ENCODE measurements at regions of chr16 and their contacts with region 1.

Region 1: GRCh38 chr16:19138601-19139000 is 24.8 kb downstream of the ITPRIPL2 start:
- DNase-seq: peak; percentile 80
- H3K4me3 ChIP-seq: no peak overlapping the region
- H3K27me3 ChIP-seq: no peaks in the 10 kb centered on the region; the same call in 1 of the 2 replicates
- CTCF ChIP-seq: no peak

Region 2: GRCh38 chr16:19113453-19114351 is 24.9 kb before region 1 on chr16 and contains the start of gene ITPRIPL2:
- CTCF ChIA-PET with region 1: interaction called, 12 read pairs
- POLR2A ChIA-PET with region 1: no interaction called
- DNase-seq: peak; percentile 61
- H3K4me3 ChIP-seq: peak within 1 kb of the TSS; percentile 75
- H3K27me3 ChIP-seq: no peaks in the 10 kb centered on the region
- CTCF ChIP-seq: 0 out of 2 replicates have a peak, but pooled peaks have one; percentile 13
- polyA plus RNA-seq, gene ITPRIPL2: 14.9 and 15.8 TPM in 2 replicates

Region 3: DNA sequence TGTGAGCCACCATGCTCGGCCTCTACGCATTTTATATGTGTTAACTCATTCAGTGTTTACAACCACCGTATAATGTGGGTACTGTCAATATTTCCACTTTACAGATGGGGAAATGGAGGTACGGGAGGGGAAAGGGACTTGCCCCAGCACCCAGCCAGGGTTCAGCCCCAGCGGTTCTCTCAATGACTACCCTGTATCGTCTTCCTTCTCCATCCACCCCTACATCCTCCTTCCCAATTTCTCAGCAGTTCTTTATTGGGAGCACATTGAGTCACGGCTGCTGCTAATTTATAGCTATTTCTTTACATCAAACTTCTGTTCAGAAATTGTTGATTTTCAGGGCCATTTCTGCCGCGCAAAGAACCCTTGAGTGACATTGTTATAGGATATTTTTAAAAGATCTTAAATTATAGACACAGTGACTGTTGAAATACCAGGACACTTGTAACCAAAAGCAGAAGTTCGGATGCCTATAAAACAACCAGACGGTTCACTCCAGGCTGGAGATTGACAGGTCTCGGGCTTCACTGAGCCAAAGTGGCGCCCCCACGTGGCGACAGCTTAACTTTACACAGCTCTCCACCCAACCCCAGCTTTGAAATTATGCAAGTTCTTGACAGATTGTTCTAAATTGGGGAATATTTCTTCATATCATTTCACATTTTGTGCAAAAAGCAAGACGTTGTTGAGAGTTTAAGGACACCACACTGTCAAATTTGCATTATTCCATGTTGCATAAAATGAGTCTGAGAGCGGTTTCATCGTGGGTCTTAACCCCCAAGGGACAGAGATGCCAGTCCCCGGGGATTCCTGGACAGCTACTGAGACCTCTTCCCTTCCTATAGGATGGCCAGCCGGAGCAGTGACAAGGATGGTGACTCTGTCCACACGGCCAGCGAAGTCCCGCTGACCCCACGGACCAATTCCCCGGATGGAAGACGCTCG is 41.2 kb after region 1 on chr16:
- CTCF ChIA-PET with region 1: interaction called, 31 read pairs
- POLR2A ChIA-PET with region 1: no interaction called
- DNase-seq: no peak
- H3K4me3 ChIP-seq: no peak overlapping the region
- H3K27me3 ChIP-seq: peaks cover 2% of the 10 kb centered on the region; the same call in 1 of the 2 replicates
- CTCF ChIP-seq: peak; percentile 62

Measured in BJ (cell line).